WTC11 (cell line): ENCODE measurements at regions of chr5 and their contacts with region 1.

Region 1: GRCh38 chr5:137629646-137630045 is 106.2 kb downstream of the KLHL3 start:
- DNase-seq: peak; percentile 46
- ATAC-seq: peak; percentile 88
- H3K4me3 Mint-ChIP-seq: peak overlapping the region; percentile 30; the same call in 1 of the 2 replicates
- H3K27ac Mint-ChIP-seq: no peak overlapping the region
- H3K4me1 Mint-ChIP-seq: peaks cover 10% of the 10 kb centered on the region
- H3K27me3 Mint-ChIP-seq: no peaks in the 10 kb centered on the region
- CTCF ChIP-seq: peak; percentile 92

Region 2: GRCh38 chr5:137344723-137345322 is 284.8 kb before region 1 on chr5:
- CTCF ChIA-PET with region 1: no interaction called
- POLR2A ChIA-PET with region 1: no interaction called
- DNase-seq: peak; percentile 74
- ATAC-seq: peak; percentile 31; the same call in 1 of the 2 replicates
- H3K4me3 Mint-ChIP-seq: no peak overlapping the region
- H3K27ac Mint-ChIP-seq: no peak overlapping the region
- H3K4me1 Mint-ChIP-seq: peaks cover 40% of the 10 kb centered on the region
- H3K27me3 Mint-ChIP-seq: no peaks in the 10 kb centered on the region
- CTCF ChIP-seq: peak; percentile 82

Region 3: GRCh38 chr5:137613554-137614265 is 15.9 kb before region 1 on chr5:
- CTCF ChIA-PET with region 1: interaction called, 25 read pairs
- POLR2A ChIA-PET with region 1: no interaction called
- DNase-seq: no peak
- ATAC-seq: no peak
- H3K4me3 Mint-ChIP-seq: no peak overlapping the region
- H3K27ac Mint-ChIP-seq: no peak overlapping the region
- H3K4me1 Mint-ChIP-seq: 0 out of 2 replicates have a peak, but pooled peaks cover 2% of the 10 kb centered on the region
- H3K27me3 Mint-ChIP-seq: no peaks in the 10 kb centered on the region
- CTCF ChIP-seq: no peak

Region 4: GRCh38 chr5:137660349-137660817 is 30.7 kb after region 1 on chr5:
- CTCF ChIA-PET with region 1: interaction called, 46 read pairs
- POLR2A ChIA-PET with region 1: no interaction called
- DNase-seq: peak; percentile 82
- ATAC-seq: peak; percentile 97
- H3K4me3 Mint-ChIP-seq: no peak overlapping the region
- H3K27ac Mint-ChIP-seq: no peak overlapping the region
- H3K4me1 Mint-ChIP-seq: no peaks in the 10 kb centered on the region
- H3K27me3 Mint-ChIP-seq: no peaks in the 10 kb centered on the region
- CTCF ChIP-seq: peak; percentile 71; the same call in 1 of the 2 replicates

Region 5: DNA sequence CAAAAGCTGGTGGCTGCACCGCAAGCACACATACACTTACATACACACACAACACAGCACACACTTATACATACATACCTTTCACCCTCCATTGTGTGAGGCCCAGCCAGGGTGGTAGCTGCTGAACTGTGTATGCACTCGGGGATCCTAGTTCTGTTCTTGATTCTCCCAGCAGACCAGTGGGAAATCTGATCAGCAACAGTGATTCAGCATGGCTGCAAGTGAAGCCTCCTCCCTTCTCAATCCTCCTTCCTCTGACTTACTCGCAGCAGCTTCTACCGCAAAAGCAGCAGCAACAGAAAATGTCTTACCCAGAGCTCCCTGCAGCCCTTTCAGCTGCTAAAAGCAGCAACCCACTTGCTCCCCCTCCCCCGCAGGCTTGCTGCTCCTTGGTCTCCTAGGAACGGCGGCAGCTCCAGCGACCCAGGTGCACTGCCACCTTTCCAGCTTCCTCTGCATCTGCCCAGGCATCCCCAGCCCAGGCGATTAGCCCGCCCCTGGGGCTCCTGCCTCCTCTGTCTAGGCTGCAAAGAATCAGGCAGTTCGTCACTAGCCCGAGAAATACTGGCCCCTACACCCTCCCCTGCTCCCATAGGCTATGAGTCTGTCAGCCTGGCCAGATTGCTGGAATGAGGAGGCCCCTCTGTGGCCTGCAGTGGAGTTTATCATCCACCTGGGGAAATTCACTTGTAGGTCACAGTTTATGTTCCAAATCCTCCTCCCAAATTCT is 106.1 kb after region 1 on chr5 and contains the start of gene KLHL3:
- CTCF ChIA-PET with region 1: interaction called, 135 read pairs
- POLR2A ChIA-PET with region 1: interaction called, 4 read pairs
- DNase-seq: peak; percentile 89
- ATAC-seq: peak; percentile 97
- H3K4me3 Mint-ChIP-seq: no peak within 1 kb of the TSS
- H3K27ac Mint-ChIP-seq: no peak within 1 kb of the TSS
- H3K4me1 Mint-ChIP-seq: peaks cover 3% of the 10 kb centered on the region
- H3K27me3 Mint-ChIP-seq: no peaks in the 10 kb centered on the region; the same call in 1 of the 2 replicates
- CTCF ChIP-seq: no peak
- total RNA-seq, gene KLHL3: 14.7 to 18.2 TPM (median 15.7 TPM) in 3 replicates

Region 6: GRCh38 chr5:137778772-137779564 is 149.3 kb after region 1 on chr5:
- CTCF ChIA-PET with region 1: interaction called, 31 read pairs
- POLR2A ChIA-PET with region 1: no interaction called
- DNase-seq: no peak
- ATAC-seq: no peak
- H3K4me3 Mint-ChIP-seq: no peak overlapping the region
- H3K27ac Mint-ChIP-seq: no peak overlapping the region
- H3K4me1 Mint-ChIP-seq: no peaks in the 10 kb centered on the region
- H3K27me3 Mint-ChIP-seq: peaks cover 9% of the 10 kb centered on the region
- CTCF ChIP-seq: peak; percentile 57